CD8-positive, alpha-beta T cell (primary cell): ENCODE measurements at regions of chr11 and their contacts with region 1.

Region 1: GRCh38 chr11:110195845-110196754 is 100.3 kb downstream of the RDX start:
- DNase-seq: no peak
- ATAC-seq: no peak
- H3K4me3 ChIP-seq: no peak overlapping the region
- H3K4me3 Mint-ChIP-seq: no peak overlapping the region
- H3K27ac ChIP-seq: no peak overlapping the region
- H3K27ac Mint-ChIP-seq: no peak overlapping the region
- H3K4me1 ChIP-seq: no peaks in the 10 kb centered on the region
- H3K4me1 Mint-ChIP-seq: peaks cover 10% of the 10 kb centered on the region
- H3K27me3 ChIP-seq: no peaks in the 10 kb centered on the region
- H3K27me3 Mint-ChIP-seq: no peaks in the 10 kb centered on the region
- CTCF ChIP-seq: no peak

Region 2: DNA sequence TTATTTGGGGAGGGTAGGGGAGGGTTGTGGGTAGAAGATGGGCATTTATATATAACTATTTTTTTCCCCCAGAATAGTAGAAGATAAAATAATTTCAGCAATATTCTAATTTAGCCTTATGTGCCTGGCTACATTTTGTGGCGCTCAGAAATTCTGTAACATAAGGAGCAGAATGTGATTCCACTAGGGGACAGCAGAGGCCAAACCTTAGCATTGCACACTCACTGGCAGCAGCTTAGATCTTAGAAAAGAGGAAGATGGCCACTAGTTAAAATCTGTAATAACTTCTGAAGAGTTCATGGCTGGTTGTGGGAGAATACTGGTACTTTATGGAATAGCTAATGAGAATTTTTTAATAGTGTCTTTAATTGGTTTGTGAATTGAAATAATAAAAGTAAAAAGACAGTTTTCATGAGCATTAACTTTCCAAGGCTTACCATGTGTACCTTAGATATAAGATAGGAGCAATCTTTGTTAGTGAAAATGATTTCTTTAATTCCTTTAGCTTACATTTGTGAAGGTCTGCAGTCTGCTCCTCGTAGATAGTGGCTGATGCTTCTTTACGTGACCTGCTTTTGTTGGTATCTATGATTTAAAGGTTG is 1498.1 kb before region 1 on chr11:
- CTCF ChIA-PET with region 1: no interaction called
- POLR2A ChIA-PET with region 1: no interaction called
- intact Hi-C with region 1: no loop called
- DNase-seq: peak in 4 of 9 experiments; percentile 13 to 58 (median 40)
- ATAC-seq: peak; percentile 62
- H3K4me3 ChIP-seq: no peak overlapping the region
- H3K4me3 Mint-ChIP-seq: no peak overlapping the region
- H3K27ac ChIP-seq: no peak overlapping the region
- H3K27ac Mint-ChIP-seq: no peak overlapping the region
- H3K4me1 ChIP-seq: no peaks in the 10 kb centered on the region
- H3K4me1 Mint-ChIP-seq: no peaks in the 10 kb centered on the region
- H3K27me3 ChIP-seq: no peaks in the 10 kb centered on the region
- H3K27me3 Mint-ChIP-seq: no peaks in the 10 kb centered on the region
- CTCF ChIP-seq: peak; percentile 61

Region 3: GRCh38 chr11:110182551-110183285 is 13.4 kb before region 1 on chr11:
- CTCF ChIA-PET with region 1: interaction called, 12 read pairs
- POLR2A ChIA-PET with region 1: no interaction called
- intact Hi-C with region 1: no loop called
- DNase-seq: no peak
- ATAC-seq: no peak
- H3K4me3 ChIP-seq: no peak overlapping the region
- H3K4me3 Mint-ChIP-seq: no peak overlapping the region
- H3K27ac ChIP-seq: no peak overlapping the region
- H3K27ac Mint-ChIP-seq: no peak overlapping the region
- H3K4me1 ChIP-seq: no peaks in the 10 kb centered on the region
- H3K4me1 Mint-ChIP-seq: no peaks in the 10 kb centered on the region
- H3K27me3 ChIP-seq: no peaks in the 10 kb centered on the region
- H3K27me3 Mint-ChIP-seq: peaks cover 8% of the 10 kb centered on the region
- CTCF ChIP-seq: no peak

Region 4: GRCh38 chr11:110251837-110252236 is 55.7 kb after region 1 on chr11:
- CTCF ChIA-PET with region 1: interaction called, 12 read pairs
- POLR2A ChIA-PET with region 1: interaction called, 3 read pairs
- intact Hi-C with region 1: loop called (anchors 1 kb)
- DNase-seq: no peak
- ATAC-seq: no peak
- H3K4me3 ChIP-seq: no peak overlapping the region
- H3K4me3 Mint-ChIP-seq: no peak overlapping the region
- H3K27ac ChIP-seq: no peak overlapping the region
- H3K27ac Mint-ChIP-seq: no peak overlapping the region
- H3K4me1 ChIP-seq: no peaks in the 10 kb centered on the region
- H3K4me1 Mint-ChIP-seq: no peaks in the 10 kb centered on the region
- H3K27me3 ChIP-seq: no peaks in the 10 kb centered on the region
- H3K27me3 Mint-ChIP-seq: no peaks in the 10 kb centered on the region
- CTCF ChIP-seq: no peak

Region 5: DNA sequence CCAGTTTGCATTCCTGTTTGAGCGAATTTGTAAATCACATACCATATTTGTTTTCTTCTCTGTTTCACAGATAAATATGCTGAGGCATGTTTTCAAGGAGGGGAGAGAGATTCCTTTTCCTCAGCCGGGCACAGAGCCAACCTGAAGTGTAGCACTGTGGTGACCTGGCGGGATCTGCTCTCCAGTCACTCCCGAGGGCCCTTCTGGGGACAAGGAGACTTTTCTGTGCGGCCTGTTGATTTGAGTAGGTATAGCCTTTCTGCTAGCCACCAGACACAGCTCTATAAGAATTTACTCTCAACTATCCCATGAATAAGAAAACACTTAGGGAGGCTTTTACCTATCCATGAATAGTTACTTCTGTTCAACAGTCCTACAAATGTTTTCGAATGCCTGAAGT is 170.2 kb after region 1 on chr11:
- CTCF ChIA-PET with region 1: interaction called, 48 read pairs
- POLR2A ChIA-PET with region 1: interaction called, 3 read pairs
- intact Hi-C with region 1: loop called (anchors 1 to 2 kb)
- DNase-seq: no peak
- ATAC-seq: no peak
- H3K4me3 ChIP-seq: no peak overlapping the region
- H3K4me3 Mint-ChIP-seq: no peak overlapping the region
- H3K27ac ChIP-seq: no peak overlapping the region
- H3K27ac Mint-ChIP-seq: no peak overlapping the region
- H3K4me1 ChIP-seq: no peaks in the 10 kb centered on the region
- H3K4me1 Mint-ChIP-seq: no peaks in the 10 kb centered on the region
- H3K27me3 ChIP-seq: no peaks in the 10 kb centered on the region
- H3K27me3 Mint-ChIP-seq: no peaks in the 10 kb centered on the region
- CTCF ChIP-seq: no peak

Region 6: GRCh38 chr11:111230122-111230465 is 1034.0 kb after region 1 on chr11:
- CTCF ChIA-PET with region 1: interaction called, 22 read pairs
- POLR2A ChIA-PET with region 1: no interaction called
- intact Hi-C with region 1: loop called in 1 of 2 experiments (anchors 1 kb)
- DNase-seq: no peak
- ATAC-seq: peak; percentile 34
- H3K4me3 ChIP-seq: peak overlapping the region in 1 of 2 experiments; percentile 6
- H3K4me3 Mint-ChIP-seq: peak overlapping the region; percentile 66
- H3K27ac ChIP-seq: no peak overlapping the region
- H3K27ac Mint-ChIP-seq: no peak overlapping the region
- H3K4me1 ChIP-seq: peaks cover 15% of the 10 kb centered on the region
- H3K4me1 Mint-ChIP-seq: peaks cover 16% of the 10 kb centered on the region
- H3K27me3 ChIP-seq: no peaks in the 10 kb centered on the region
- H3K27me3 Mint-ChIP-seq: peaks cover 22% of the 10 kb centered on the region
- CTCF ChIP-seq: no peak